A673 (cell line): ENCODE measurements at regions of chr5 and their contacts with region 1.

Region 1: DNA sequence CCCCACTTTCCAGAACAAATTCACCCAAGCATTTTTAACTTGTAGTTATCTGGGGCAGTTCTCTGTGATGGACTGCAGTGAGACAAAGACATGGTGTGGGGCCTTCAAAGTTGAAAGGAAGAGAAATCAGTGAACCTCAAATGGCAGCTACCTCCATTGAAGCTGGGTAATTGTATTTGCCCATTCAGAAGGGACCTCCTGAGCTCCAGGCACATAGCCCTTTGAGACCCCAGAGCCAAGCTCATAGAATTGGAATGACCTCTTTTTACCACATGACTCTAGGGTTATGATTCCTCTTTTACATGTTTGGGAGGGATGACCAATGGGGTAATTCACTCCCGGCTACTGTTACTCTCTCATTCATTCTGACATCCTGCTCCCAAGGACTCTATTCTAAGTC is 368.4 kb upstream of the ITGA1 start:
- DNase-seq: no peak
- H3K4me3 ChIP-seq: no peak overlapping the region
- H3K27ac ChIP-seq: no peak overlapping the region
- H3K4me1 ChIP-seq: peaks cover 24% of the 10 kb centered on the region
- H3K27me3 ChIP-seq: no peaks in the 10 kb centered on the region
- CTCF ChIP-seq: no peak

Region 2: GRCh38 chr5:51902486-51902885 is 516.9 kb before region 1 on chr5:
- CTCF ChIA-PET with region 1: no interaction called
- POLR2A ChIA-PET with region 1: no interaction called
- intact Hi-C with region 1: no loop called
- DNase-seq: no peak
- H3K4me3 ChIP-seq: no peak overlapping the region
- H3K27ac ChIP-seq: no peak overlapping the region
- H3K4me1 ChIP-seq: no peaks in the 10 kb centered on the region
- H3K27me3 ChIP-seq: no peaks in the 10 kb centered on the region
- CTCF ChIP-seq: no peak

Region 3: DNA sequence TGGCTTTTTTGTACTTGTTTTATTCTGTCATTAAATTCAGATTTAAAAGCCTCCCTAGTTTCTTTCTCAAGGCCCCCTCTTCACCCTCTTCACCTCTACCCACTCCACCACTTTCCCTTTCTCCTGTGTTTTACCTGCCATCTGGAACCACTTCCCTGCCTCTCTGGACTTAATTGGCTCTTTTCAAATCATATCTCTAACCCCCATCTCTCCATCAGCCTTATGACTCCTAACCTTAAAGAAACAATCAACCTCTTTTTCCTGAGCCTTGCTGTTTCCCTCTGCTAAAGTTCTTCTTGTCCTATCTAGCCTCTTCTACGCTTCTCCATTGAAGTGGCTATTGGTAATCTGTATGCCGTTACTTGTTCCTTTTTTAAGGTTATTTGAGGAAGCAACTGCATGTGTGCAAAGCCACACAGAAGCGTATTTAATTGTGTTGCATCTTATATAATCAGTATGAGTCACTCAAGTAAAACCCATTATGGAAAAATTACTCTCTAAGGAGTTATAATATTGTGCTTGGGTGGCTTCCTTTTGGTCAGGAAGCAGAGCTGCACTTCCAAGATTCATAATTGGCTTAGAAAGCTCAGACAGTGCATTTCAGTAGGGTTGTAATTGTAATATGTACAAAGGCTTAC is 285.2 kb before region 1 on chr5:
- CTCF ChIA-PET with region 1: no interaction called
- POLR2A ChIA-PET with region 1: no interaction called
- intact Hi-C with region 1: loop called (anchors 10 kb)
- DNase-seq: peak; percentile 94
- H3K4me3 ChIP-seq: peak overlapping the region; percentile 9
- H3K27ac ChIP-seq: peak overlapping the region; percentile 84
- H3K4me1 ChIP-seq: peaks cover 54% of the 10 kb centered on the region
- H3K27me3 ChIP-seq: no peaks in the 10 kb centered on the region
- CTCF ChIP-seq: no peak

Region 4: DNA sequence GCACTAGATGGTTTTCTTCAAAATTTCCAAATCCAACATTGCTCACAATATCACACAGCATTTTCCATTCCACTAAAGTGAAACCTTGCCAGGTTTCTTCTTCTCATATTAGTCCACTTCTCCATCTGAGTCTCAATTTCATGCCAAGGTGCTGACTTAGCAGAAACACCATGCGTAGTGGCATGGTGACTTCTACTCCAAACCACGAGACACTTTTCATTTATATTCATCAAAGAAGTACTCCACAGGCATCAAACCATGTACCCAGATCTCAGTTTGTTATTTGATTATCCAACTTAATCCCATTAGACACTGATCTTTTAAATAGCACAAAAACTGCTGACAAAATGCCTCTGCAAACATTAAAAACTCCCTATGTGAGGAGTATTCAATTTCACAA is 134.9 kb after region 1 on chr5:
- CTCF ChIA-PET with region 1: no interaction called
- POLR2A ChIA-PET with region 1: no interaction called
- intact Hi-C with region 1: loop called (anchors 5 kb)
- DNase-seq: peak; percentile 84
- H3K4me3 ChIP-seq: no peak overlapping the region
- H3K27ac ChIP-seq: no peak overlapping the region
- H3K4me1 ChIP-seq: peaks cover 26% of the 10 kb centered on the region
- H3K27me3 ChIP-seq: no peaks in the 10 kb centered on the region
- CTCF ChIP-seq: no peak